Common myeloid progenitor, CD34-positive (primary cell): ENCODE measurements at regions of chr1 and their contacts with region 1.

Region 1: GRCh38 chr1:6889875-6890480 is 104.7 kb downstream of the CAMTA1 start:
- DNase-seq: peak; percentile 54 to 76 (median 70)
- H3K4me3 ChIP-seq: no peak overlapping the region
- H3K27ac ChIP-seq: no peak overlapping the region
- H3K4me1 ChIP-seq: no peaks in the 10 kb centered on the region
- H3K27me3 ChIP-seq: no peaks in the 10 kb centered on the region

Region 2: GRCh38 chr1:6613361-6614018 is 276.5 kb before region 1 on chr1 and contains the start of gene PHF13:
- CTCF ChIA-PET with region 1: no interaction called
- POLR2A ChIA-PET with region 1: no interaction called
- DNase-seq: peak; percentile 99
- H3K4me3 ChIP-seq: peak within 1 kb of the TSS; percentile 64 to 89 (median 82)
- H3K27ac ChIP-seq: peak within 1 kb of the TSS in 1 of 2 experiments; percentile 71
- H3K4me1 ChIP-seq: peaks cover 0 to 17% (median 14%) of the 10 kb centered on the region in 4 experiments
- H3K27me3 ChIP-seq: no peaks in the 10 kb centered on the region

Region 3: DNA sequence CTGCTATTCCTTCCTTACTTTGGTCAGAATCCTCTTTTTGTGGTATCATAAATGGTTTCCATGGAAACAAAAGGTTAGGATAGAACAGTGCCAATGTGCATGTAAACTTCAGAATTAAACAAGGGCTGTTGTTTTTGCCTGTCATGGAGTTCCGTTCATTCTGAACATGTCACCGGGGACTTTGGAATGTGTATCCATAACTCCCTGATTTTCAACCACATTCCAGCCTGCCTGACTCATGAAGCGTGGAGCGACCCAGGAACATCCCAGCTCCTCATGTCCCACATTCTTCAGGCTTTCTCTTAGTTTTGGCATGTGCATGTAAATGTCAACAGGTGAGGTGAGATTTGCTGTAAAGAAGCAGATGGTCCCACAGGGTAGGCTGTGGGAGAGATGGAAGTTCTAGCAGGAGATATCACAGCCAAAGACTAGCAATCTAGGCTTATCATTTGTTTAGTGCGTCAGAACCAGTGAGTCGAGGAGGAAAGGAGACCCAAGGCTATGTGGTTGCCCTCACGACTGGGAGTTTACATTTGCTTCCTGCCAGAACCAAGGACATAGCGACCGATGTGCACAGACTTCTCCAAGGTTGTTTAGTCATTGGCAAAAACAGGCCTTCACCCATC is 165.3 kb before region 1 on chr1:
- CTCF ChIA-PET with region 1: interaction called, 10 read pairs
- POLR2A ChIA-PET with region 1: no interaction called
- DNase-seq: no peak
- H3K4me3 ChIP-seq: no peak overlapping the region
- H3K27ac ChIP-seq: no peak overlapping the region
- H3K4me1 ChIP-seq: no peaks in the 10 kb centered on the region
- H3K27me3 ChIP-seq: no peaks in the 10 kb centered on the region

Region 4: DNA sequence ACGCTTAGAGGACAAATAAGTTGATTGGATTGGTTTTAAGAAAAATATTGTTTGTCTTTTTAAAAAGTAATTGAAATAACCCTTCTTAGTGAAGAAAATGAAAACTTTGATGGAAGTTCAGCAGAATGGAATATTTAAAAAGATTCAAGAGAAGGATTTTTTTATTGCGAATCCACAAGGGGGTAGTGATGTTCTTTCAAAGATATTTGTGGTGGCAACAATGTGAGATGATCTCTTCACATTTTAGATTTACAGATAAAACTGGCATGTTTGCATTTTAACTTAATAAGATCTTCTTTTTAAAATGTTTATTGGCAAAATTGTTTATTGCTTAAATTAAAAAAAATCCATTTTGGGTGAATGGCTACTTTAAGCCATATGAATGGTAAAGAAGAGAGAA is 95.8 kb before region 1 on chr1:
- CTCF ChIA-PET with region 1: interaction called, 16 read pairs
- POLR2A ChIA-PET with region 1: no interaction called
- DNase-seq: peak; percentile 69 to 83 (median 80)
- H3K4me3 ChIP-seq: no peak overlapping the region
- H3K27ac ChIP-seq: no peak overlapping the region
- H3K4me1 ChIP-seq: peaks cover 0 to 3% (median 2%) of the 10 kb centered on the region in 4 experiments
- H3K27me3 ChIP-seq: no peaks in the 10 kb centered on the region

Region 5: GRCh38 chr1:6801966-6802365 is 88.0 kb before region 1 on chr1:
- CTCF ChIA-PET with region 1: interaction called, 12 read pairs
- POLR2A ChIA-PET with region 1: no interaction called
- DNase-seq: peak in 2 of 3 donors; percentile 57 to 72
- H3K4me3 ChIP-seq: peak overlapping the region in 2 of 7 experiments; percentile 16 to 45
- H3K27ac ChIP-seq: no peak overlapping the region
- H3K4me1 ChIP-seq: peaks cover 9 to 43% (median 21%) of the 10 kb centered on the region in 4 experiments
- H3K27me3 ChIP-seq: no peaks in the 10 kb centered on the region

Region 6: DNA sequence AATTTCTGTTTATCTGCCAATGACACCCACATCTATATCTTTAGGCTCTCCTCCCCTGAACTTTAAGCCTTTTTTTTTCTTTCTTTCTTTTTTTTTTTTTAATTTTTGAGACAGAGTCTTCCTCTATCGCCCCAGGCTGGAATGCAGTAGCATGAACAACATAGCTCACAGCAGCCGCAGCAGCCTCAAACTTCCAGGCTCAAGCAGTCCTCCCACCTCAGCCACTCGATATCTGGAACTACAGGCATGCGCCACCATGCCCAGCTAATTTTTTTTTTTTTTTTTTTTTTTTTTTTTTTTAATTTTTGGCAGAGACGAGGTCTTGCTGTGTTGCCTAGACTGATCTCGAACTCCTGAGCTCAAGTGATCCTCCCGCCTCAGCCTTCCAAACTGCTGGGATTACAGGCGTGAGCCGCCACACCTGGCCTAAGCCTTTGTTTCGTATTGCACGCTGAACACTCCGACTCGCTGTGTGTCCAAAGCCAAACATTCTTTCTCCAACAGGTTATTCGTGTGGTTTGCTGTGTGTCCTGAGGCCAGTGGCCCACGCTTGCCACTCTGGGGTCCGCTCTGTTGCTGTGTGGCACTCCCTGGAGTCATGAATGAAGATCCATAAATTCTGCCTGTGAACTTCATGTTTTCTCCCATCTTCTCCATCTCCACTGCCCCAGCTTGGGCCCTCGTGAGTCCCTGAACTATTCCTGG is 14.6 kb after region 1 on chr1:
- CTCF ChIA-PET with region 1: interaction called, 15 read pairs
- POLR2A ChIA-PET with region 1: no interaction called
- DNase-seq: no peak
- H3K4me3 ChIP-seq: no peak overlapping the region
- H3K27ac ChIP-seq: no peak overlapping the region
- H3K4me1 ChIP-seq: peaks cover 0 to 8% (median 6%) of the 10 kb centered on the region in 4 experiments
- H3K27me3 ChIP-seq: no peaks in the 10 kb centered on the region

Region 7: DNA sequence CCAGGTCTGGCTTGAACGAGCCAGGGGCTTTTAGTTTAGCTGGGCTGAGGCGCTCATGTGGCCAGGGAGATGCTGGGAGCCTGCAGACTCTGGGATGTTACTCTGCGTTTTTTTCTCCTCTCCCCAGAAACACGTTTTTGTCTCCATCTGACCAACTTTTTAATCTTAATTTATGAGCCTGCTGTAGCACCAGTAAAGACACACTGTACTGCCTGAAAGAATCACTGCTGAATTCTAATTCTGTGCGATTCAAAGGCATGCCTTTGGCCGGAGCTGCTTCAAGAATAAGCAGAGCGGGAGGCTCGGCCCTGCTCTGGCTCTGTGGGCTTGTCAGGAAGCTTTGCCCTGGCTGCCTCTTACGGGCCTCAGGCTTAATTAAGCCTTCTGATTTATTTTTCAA is 24.7 kb after region 1 on chr1:
- CTCF ChIA-PET with region 1: no interaction called
- POLR2A ChIA-PET with region 1: no interaction called
- DNase-seq: no peak
- H3K4me3 ChIP-seq: no peak overlapping the region
- H3K27ac ChIP-seq: no peak overlapping the region
- H3K4me1 ChIP-seq: peaks cover 0 to 39% (median 5%) of the 10 kb centered on the region in 4 experiments
- H3K27me3 ChIP-seq: peaks cover 0 to 7% (median 0%) of the 10 kb centered on the region in 5 experiments